Transverse colon (tissue), 4 donors: ENCODE measurements at regions of chrX and their contacts with region 1.

Region 1: GRCh38 chrX:20393944-20394343 is 127.2 kb upstream of the RPS6KA3 start:
- DNase-seq: no peak
- H3K4me3 ChIP-seq: no peak overlapping the region
- H3K27ac ChIP-seq: no peak overlapping the region
- H3K4me1 ChIP-seq: peaks cover 0 to 4% (median 0%) of the 10 kb centered on the region in 4 donors
- H3K27me3 ChIP-seq: no peaks in the 10 kb centered on the region
- CTCF ChIP-seq: no peak
- EP300 ChIP-seq: no peak
- POLR2A ChIP-seq: no peak

Region 2: GRCh38 chrX:20352935-20353336 is 41.0 kb before region 1 on chrX:
- in situ Hi-C with region 1: no loop called
- intact Hi-C with region 1: loop called (anchors 1 kb)
- DNase-seq: no peak
- H3K4me3 ChIP-seq: no peak overlapping the region
- H3K27ac ChIP-seq: no peak overlapping the region
- H3K4me1 ChIP-seq: no peaks in the 10 kb centered on the region
- H3K27me3 ChIP-seq: no peaks in the 10 kb centered on the region
- CTCF ChIP-seq: no peak
- EP300 ChIP-seq: no peak
- POLR2A ChIP-seq: no peak